WTC11 (cell line): ENCODE measurements at regions of chr9 and their contacts with region 1.

Region 1: DNA sequence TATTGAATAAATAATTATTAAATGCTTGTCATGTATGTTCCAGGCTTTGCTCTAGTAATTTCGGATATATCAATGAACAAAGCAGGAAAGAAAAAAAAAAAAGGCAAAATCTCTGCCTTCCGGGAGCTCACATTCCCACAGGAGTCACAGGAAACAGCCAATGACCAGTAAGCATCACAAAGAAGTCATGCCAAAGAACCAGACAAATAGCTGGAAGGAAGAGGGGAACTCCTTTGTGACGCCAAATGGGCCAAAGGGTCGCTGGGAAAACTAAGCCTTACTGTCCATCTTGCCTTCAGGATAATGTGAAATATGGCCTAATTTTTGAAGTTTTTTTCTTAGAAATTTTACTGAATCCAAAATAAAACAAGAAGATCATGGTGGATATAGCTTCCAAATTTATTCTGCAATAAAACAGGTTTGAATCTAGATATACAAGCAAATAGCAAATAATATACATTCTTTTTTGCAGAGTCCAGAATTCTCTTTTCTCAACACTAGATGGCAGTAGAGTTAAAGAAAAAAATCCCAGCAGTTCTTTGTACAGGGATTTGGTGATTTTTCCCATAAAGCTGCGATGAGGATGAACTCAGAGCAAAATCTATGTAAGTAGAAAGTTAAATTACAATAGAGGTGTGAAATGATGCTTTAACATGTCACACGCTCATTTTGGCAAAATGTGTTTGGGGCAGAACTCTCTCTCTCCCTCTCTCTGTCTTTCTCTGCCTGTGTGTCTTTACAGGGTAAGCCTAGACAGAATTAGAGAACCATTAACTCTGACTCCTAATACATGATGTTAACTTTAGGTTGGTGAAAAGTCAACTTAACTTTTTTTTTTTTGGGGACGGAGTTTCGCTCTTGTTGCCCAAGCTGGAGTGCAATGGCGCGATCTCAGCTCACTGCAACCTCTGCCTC is 60.0 kb upstream of the TUT7 start:
- DNase-seq: no peak
- ATAC-seq: no peak
- H3K4me3 Mint-ChIP-seq: no peak overlapping the region
- H3K27ac Mint-ChIP-seq: no peak overlapping the region
- H3K4me1 Mint-ChIP-seq: no peaks in the 10 kb centered on the region
- H3K27me3 Mint-ChIP-seq: peaks cover 88% of the 10 kb centered on the region
- CTCF ChIP-seq: peak; percentile 61

Region 2: GRCh38 chr9:86354011-86354817 is 60.0 kb before region 1 on chr9 and contains the start of gene TUT7:
- CTCF ChIA-PET with region 1: no interaction called
- POLR2A ChIA-PET with region 1: no interaction called
- DNase-seq: peak; percentile 97
- ATAC-seq: peak; percentile 94
- H3K4me3 Mint-ChIP-seq: peak within 1 kb of the TSS; percentile 100
- H3K27ac Mint-ChIP-seq: peak within 1 kb of the TSS; percentile 99
- H3K4me1 Mint-ChIP-seq: peaks cover 20% of the 10 kb centered on the region
- H3K27me3 Mint-ChIP-seq: peaks cover 17% of the 10 kb centered on the region
- CTCF ChIP-seq: no peak
- total RNA-seq, gene TUT7: 18.8 to 24.5 TPM (median 19.8 TPM) in 3 replicates

Region 3: GRCh38 chr9:86486891-86487837 is 72.9 kb after region 1 on chr9:
- CTCF ChIA-PET with region 1: interaction called, 20 read pairs
- POLR2A ChIA-PET with region 1: no interaction called
- DNase-seq: no peak
- ATAC-seq: peak; percentile 61
- H3K4me3 Mint-ChIP-seq: no peak overlapping the region
- H3K27ac Mint-ChIP-seq: no peak overlapping the region
- H3K4me1 Mint-ChIP-seq: peaks cover 4% of the 10 kb centered on the region; the same call in 1 of the 2 replicates
- H3K27me3 Mint-ChIP-seq: no peaks in the 10 kb centered on the region; the same call in 1 of the 2 replicates
- CTCF ChIP-seq: peak; percentile 33; the same call in 1 of the 2 replicates